MCF 10A (cell line): ENCODE measurements at regions of chr1 and their contacts with region 1.

Region 1: DNA sequence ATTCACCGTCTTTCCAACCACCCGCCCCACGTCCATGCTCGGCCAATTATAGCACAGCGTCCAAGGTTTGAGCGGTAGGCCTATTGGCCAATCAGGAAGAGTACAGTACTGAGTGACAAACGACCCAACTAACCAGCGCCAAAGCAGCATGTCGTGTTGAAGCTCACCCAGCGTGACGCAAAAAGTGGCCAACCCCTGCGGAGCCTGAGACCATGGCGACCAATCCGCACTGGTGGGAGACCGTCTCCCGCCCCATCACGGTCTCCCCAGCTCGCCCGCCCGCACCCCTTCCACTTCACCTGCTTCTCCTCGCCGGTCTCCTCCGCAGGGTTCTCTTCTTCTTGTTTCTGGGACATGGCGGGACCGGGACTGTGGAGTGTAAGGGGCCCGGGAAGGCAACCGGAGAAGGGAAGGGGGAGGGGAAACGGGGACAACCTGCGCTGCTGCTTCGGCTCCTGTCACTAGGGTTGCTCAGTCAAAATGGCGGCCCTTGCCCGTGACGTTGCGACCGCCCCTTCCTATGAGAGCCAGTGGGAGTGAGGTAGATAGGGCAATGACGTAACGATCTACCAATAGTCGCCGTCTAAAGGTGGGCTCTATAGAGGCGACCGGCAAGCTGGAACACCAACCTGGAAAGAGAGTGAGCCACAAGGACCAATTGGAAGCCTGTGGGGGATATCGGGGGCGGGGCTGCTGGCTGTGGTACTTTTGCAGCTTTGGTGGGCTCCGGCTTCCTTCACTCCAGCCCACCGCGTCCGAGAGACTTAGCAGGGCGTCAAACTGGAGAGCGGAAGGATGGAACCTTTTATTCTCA is at the start of gene ENSA:
- DNase-seq: peak; percentile 100
- H3K4me3 Mint-ChIP-seq: no peak within 1 kb of the TSS
- H3K27ac Mint-ChIP-seq: no peak within 1 kb of the TSS
- H3K4me1 Mint-ChIP-seq: peaks cover 44% of the 10 kb centered on the region
- H3K27me3 Mint-ChIP-seq: no peaks in the 10 kb centered on the region
- CTCF ChIP-seq: no peak
- total RNA-seq, gene ENSA: 261 and 294 TPM in 2 replicates

Region 2: DNA sequence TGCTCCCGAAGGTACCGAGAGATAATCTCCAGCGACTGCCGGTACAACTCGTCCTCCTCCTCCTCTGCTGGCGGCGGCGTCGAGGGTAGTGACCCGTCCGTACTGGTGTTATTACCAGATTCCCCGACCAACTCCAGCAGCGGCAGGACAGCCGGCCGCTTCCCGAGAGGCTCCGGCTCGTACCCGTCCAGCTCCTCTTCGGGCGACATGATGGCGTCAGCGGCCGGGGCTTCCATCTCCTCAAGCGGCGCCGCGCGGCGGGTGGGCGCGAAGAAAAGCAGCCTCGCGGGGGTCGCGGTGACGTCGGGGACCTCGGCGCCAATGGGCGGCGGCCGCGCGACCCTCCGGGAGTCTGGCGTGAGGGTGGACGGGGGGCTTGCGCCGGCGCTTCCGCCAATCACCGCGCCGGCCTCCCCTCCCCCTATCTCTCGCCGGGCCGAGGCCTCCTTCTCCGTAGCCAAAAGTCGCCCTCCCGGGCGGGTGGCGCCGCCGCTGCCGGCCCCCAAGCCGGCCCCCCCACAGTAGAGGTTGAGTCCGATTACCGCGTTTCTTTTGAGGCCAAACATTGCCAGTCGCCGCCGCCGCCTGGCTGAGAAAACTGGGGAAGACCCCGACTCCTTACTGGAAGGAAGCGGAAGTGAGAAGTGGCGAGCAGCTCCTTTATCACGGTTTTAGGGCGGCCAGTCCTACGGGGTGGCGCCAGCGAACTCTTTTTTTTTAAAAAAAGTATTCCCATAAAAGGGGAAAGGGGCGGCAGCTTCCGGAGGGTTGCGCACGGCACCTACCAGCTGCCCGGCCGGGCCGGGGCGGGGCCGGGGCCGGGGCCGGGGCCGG is 50.1 kb before region 1 on chr1 and contains the start of gene MCL1:
- CTCF ChIA-PET with region 1: no interaction called
- POLR2A ChIA-PET with region 1: interaction called, 1,125 read pairs
- intact Hi-C with region 1: no loop called
- DNase-seq: peak; percentile 98
- H3K4me3 Mint-ChIP-seq: peak within 1 kb of the TSS; percentile 99
- H3K27ac Mint-ChIP-seq: peak within 1 kb of the TSS; percentile 99
- H3K4me1 Mint-ChIP-seq: peaks cover 35% of the 10 kb centered on the region
- H3K27me3 Mint-ChIP-seq: no peaks in the 10 kb centered on the region
- CTCF ChIP-seq: no peak
- total RNA-seq, gene MCL1: 497 and 624 TPM in 2 replicates

Region 3: GRCh38 chr1:150613061-150613920 is 16.0 kb before region 1 on chr1:
- CTCF ChIA-PET with region 1: interaction called, 4 read pairs
- POLR2A ChIA-PET with region 1: interaction called, 149 read pairs
- intact Hi-C with region 1: loop called (anchors 1 kb)
- DNase-seq: peak; percentile 98
- H3K4me3 Mint-ChIP-seq: peak overlapping the region; percentile 55
- H3K27ac Mint-ChIP-seq: peak overlapping the region; percentile 84
- H3K4me1 Mint-ChIP-seq: peaks cover 55% of the 10 kb centered on the region
- H3K27me3 Mint-ChIP-seq: no peaks in the 10 kb centered on the region
- CTCF ChIP-seq: no peak

Region 4: GRCh38 chr1:150650199-150650598 is 20.9 kb after region 1 on chr1:
- CTCF ChIA-PET with region 1: interaction called, 4 read pairs
- POLR2A ChIA-PET with region 1: interaction called, 54 read pairs
- intact Hi-C with region 1: no loop called
- DNase-seq: no peak
- H3K4me3 Mint-ChIP-seq: no peak overlapping the region
- H3K27ac Mint-ChIP-seq: no peak overlapping the region
- H3K4me1 Mint-ChIP-seq: no peaks in the 10 kb centered on the region
- H3K27me3 Mint-ChIP-seq: no peaks in the 10 kb centered on the region
- CTCF ChIP-seq: no peak

Region 5: DNA sequence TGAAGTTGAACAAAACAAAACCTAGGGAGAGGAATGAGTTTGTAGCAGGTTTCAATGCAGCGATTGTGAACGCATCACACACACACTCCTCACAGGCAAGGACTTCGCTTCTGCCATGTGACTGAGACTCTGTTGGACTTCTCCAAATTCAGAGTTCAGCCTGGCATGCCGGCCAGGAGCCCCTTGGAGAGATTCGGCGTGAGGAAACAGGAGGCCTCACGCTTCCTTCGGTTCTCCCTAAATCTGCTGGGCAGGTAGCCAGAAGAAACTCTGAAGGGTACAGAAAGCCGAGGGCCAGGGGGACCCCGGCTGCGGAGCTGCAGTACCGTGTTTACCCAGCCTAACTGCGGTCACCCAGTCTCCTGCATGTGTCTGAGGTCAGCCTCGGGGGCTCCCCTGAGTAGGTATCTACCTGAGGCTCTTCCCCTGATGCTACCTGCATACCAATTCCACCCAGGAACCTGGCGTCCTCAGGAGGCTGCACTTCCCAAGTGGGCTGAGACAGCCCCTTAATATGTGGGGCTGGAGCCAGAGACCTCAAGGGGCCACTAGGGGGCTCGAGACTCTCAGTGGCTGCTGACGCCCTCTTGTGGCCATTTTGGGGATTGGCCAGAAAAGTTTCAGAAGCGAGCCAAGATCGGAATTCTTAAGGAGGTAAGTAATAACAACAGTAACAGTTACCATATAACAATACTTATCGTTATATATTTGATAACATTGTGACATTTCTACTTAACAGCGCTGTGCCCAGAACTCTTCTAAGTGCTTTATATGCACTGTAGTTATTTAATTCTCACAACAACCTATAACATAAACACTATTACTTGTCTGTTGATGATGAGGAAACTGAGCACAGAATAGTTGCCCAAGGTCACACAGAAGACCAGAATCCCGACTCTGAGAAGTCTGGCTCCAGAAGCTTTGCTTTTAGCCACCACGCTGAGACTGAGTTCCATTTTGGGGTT is 350.1 kb after region 1 on chr1:
- CTCF ChIA-PET with region 1: no interaction called
- POLR2A ChIA-PET with region 1: no interaction called
- intact Hi-C with region 1: loop called (anchors 5 kb)
- DNase-seq: peak; percentile 95
- H3K4me3 Mint-ChIP-seq: no peak overlapping the region
- H3K27ac Mint-ChIP-seq: no peak overlapping the region
- H3K4me1 Mint-ChIP-seq: peaks cover 32% of the 10 kb centered on the region
- H3K27me3 Mint-ChIP-seq: no peaks in the 10 kb centered on the region
- CTCF ChIP-seq: peak; percentile 100